CD4-positive, alpha-beta T cell (primary cell): ENCODE measurements at regions of chr10 and their contacts with region 1.

Region 1: DNA sequence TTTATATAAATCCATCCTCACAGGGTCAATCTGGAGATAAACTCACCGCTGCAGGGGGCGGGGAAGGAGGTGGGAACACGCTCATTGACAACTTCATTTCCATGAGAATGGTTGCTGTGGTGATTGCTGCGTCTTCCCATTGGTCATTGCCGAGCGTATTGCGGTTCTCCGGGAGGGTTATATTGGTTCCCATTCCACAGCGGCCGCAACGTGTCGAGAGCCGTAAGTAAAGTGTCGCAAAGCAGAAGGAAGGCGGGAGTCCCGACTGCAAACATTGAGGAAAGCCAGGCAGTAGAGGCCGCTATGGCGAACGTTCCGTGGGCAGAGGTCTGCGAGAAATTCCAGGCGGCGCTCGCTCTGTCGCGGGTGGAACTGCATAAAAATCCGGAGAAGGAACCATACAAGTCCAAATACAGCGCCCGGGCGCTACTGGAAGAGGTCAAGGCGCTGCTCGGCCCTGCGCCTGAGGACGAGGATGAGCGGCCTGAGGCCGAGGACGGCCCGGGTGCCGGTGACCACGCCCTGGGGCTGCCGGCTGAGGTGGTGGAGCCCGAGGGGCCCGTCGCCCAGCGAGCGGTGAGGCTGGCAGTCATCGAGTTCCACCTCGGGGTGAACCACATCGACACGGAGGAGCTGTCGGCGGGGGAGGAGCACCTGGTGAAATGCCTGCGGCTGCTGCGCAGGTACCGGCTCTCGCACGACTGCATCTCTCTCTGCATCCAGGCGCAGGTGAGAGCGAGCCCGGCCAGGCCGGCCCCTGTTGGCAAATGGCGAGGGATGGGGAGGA is at the start of gene KIFBP:
- DNase-seq: peak; percentile 60 to 95 (median 74)
- ATAC-seq: peak; percentile 81
- H3K4me3 ChIP-seq: peak within 1 kb of the TSS; percentile 90
- H3K4me3 Mint-ChIP-seq: peak within 1 kb of the TSS; percentile 98
- H3K27ac ChIP-seq: peak within 1 kb of the TSS; percentile 55 to 69
- H3K27ac Mint-ChIP-seq: peak within 1 kb of the TSS; percentile 88
- H3K4me1 ChIP-seq: peaks cover 39% of the 10 kb centered on the region
- H3K4me1 Mint-ChIP-seq: peaks cover 58% of the 10 kb centered on the region
- H3K27me3 ChIP-seq: no peaks in the 10 kb centered on the region
- H3K27me3 Mint-ChIP-seq: no peaks in the 10 kb centered on the region
- CTCF ChIP-seq: peak; percentile 43
- total RNA-seq, gene KIFBP: 4.2 TPM

Region 2: DNA sequence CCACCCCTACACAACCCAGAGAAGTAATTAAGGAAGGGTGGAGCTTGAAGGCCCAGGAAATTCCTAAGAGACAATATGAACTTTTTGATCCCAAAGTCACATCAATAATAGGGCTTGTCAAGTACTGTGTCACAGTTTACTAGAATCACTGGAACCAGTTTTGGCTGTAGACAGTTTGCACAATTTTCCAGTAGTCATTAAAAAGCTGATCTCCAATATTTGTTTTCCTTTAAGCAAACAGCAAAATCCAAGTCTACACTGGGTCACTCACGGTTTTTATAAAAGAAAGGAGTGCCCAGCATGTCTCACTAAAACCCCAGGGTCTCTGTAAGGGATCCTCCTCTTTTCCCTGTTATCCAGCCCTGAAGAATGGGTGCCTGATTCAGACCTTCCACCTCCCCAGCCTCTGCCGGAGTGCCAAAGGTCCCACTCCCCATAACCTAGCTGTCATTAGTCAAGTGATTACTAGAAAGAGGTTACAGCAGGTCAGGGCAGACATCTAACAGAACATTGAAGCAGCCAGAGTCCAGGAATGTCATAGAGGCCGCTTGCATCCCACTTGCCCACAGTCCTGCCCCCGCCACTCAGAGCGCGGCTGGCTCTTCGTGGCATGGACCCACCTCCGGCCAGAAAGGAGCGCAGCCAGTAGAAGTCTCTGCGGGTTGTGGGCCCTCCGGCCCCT is 462.0 kb before region 1 on chr10:
- CTCF ChIA-PET with region 1: no interaction called
- POLR2A ChIA-PET with region 1: no interaction called
- intact Hi-C with region 1: loop called in 1 of 2 experiments (anchors 10 kb)
- DNase-seq: no peak
- ATAC-seq: peak; percentile 10
- H3K4me3 ChIP-seq: peak overlapping the region; percentile 68
- H3K4me3 Mint-ChIP-seq: peak overlapping the region; percentile 88
- H3K27ac ChIP-seq: peak overlapping the region; percentile 82 to 90
- H3K27ac Mint-ChIP-seq: peak overlapping the region; percentile 96
- H3K4me1 ChIP-seq: peaks cover 16% of the 10 kb centered on the region
- H3K4me1 Mint-ChIP-seq: peaks cover 13% of the 10 kb centered on the region
- H3K27me3 ChIP-seq: no peaks in the 10 kb centered on the region
- H3K27me3 Mint-ChIP-seq: no peaks in the 10 kb centered on the region
- CTCF ChIP-seq: no peak

Region 3: GRCh38 chr10:68924593-68924992 is 64.1 kb before region 1 on chr10:
- CTCF ChIA-PET with region 1: no interaction called
- POLR2A ChIA-PET with region 1: no interaction called
- intact Hi-C with region 1: no loop called
- DNase-seq: no peak
- ATAC-seq: no peak
- H3K4me3 ChIP-seq: no peak overlapping the region
- H3K4me3 Mint-ChIP-seq: no peak overlapping the region
- H3K27ac ChIP-seq: no peak overlapping the region
- H3K27ac Mint-ChIP-seq: no peak overlapping the region
- H3K4me1 ChIP-seq: no peaks in the 10 kb centered on the region
- H3K4me1 Mint-ChIP-seq: peaks cover 7% of the 10 kb centered on the region
- H3K27me3 ChIP-seq: no peaks in the 10 kb centered on the region
- H3K27me3 Mint-ChIP-seq: no peaks in the 10 kb centered on the region
- CTCF ChIP-seq: no peak